WTC11 (cell line): ENCODE measurements at regions of chr1 and their contacts with region 1.

Region 1: GRCh38 chr1:179809506-179810366 is 66.6 kb downstream of the FAM163A start:
- DNase-seq: peak; percentile 75
- ATAC-seq: peak; percentile 75
- H3K4me3 Mint-ChIP-seq: no peak overlapping the region
- H3K27ac Mint-ChIP-seq: no peak overlapping the region
- H3K4me1 Mint-ChIP-seq: no peaks in the 10 kb centered on the region
- H3K27me3 Mint-ChIP-seq: peaks cover 6% of the 10 kb centered on the region
- CTCF ChIP-seq: peak; percentile 95

Region 2: GRCh38 chr1:179586107-179586823 is 223.5 kb before region 1 on chr1:
- CTCF ChIA-PET with region 1: interaction called, 17 read pairs
- POLR2A ChIA-PET with region 1: interaction called, 14 read pairs
- DNase-seq: peak; percentile 76
- ATAC-seq: peak; percentile 88
- H3K4me3 Mint-ChIP-seq: peak overlapping the region; percentile 57
- H3K27ac Mint-ChIP-seq: no peak overlapping the region
- H3K4me1 Mint-ChIP-seq: peaks cover 28% of the 10 kb centered on the region
- H3K27me3 Mint-ChIP-seq: peaks cover 76% of the 10 kb centered on the region
- CTCF ChIP-seq: peak; percentile 61

Region 3: DNA sequence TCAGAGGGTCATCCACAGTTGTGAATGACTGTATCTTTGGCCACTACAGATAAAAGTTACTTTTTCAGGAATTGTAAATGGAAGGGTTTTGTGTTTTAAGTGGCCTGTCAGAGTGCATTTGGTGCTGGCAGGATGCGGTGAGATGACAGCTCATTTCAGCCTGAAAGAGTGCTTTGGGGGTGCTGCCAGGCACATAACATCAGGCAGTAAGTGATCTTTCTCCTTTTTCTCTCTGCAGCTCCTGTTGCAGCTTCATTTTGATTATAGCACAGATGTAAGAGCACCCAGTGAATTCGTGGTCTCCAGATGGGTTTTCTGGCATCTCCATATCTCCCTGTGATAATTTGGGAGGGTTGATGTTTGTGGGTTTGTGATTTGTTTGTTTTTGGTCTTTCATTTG is 81.5 kb before region 1 on chr1:
- CTCF ChIA-PET with region 1: interaction called, 63 read pairs
- POLR2A ChIA-PET with region 1: no interaction called
- DNase-seq: no peak
- ATAC-seq: no peak
- H3K4me3 Mint-ChIP-seq: no peak overlapping the region
- H3K27ac Mint-ChIP-seq: no peak overlapping the region
- H3K4me1 Mint-ChIP-seq: no peaks in the 10 kb centered on the region
- H3K27me3 Mint-ChIP-seq: no peaks in the 10 kb centered on the region
- CTCF ChIP-seq: no peak

Region 4: DNA sequence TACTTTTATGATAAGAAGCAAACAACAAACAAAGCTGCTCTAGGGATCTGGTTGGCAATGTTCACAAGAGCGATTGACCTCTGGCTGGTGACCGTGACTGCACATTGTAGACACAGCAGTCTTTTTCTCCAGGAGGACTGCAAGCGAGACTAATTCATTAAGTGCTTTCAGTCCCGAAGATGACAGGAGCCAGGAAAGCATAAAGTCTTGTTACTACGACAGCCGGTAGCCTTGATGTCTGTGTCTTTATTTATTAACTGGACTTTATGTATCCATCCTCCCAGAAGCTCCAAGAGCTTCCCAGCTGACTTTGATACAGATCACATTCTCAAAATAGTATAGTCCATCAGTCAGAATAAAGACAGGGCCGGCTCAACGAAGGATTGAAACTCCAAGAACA is 48.4 kb before region 1 on chr1:
- CTCF ChIA-PET with region 1: interaction called, 20 read pairs
- POLR2A ChIA-PET with region 1: interaction called, 6 read pairs
- DNase-seq: no peak
- ATAC-seq: no peak
- H3K4me3 Mint-ChIP-seq: no peak overlapping the region
- H3K27ac Mint-ChIP-seq: no peak overlapping the region
- H3K4me1 Mint-ChIP-seq: peaks cover 12% of the 10 kb centered on the region; the same call in 1 of the 2 replicates
- H3K27me3 Mint-ChIP-seq: peaks cover 2% of the 10 kb centered on the region
- CTCF ChIP-seq: no peak

Region 5: GRCh38 chr1:179785031-179785431 is 24.7 kb before region 1 on chr1:
- CTCF ChIA-PET with region 1: interaction called, 60 read pairs
- POLR2A ChIA-PET with region 1: interaction called, 3 read pairs
- DNase-seq: no peak
- ATAC-seq: no peak
- H3K4me3 Mint-ChIP-seq: no peak overlapping the region
- H3K27ac Mint-ChIP-seq: no peak overlapping the region
- H3K4me1 Mint-ChIP-seq: peaks cover 22% of the 10 kb centered on the region
- H3K27me3 Mint-ChIP-seq: no peaks in the 10 kb centered on the region
- CTCF ChIP-seq: no peak

Region 6: GRCh38 chr1:179831852-179832699 is 22.3 kb after region 1 on chr1:
- CTCF ChIA-PET with region 1: interaction called, 30 read pairs
- POLR2A ChIA-PET with region 1: no interaction called
- DNase-seq: no peak
- ATAC-seq: peak; percentile 52
- H3K4me3 Mint-ChIP-seq: no peak overlapping the region
- H3K27ac Mint-ChIP-seq: no peak overlapping the region
- H3K4me1 Mint-ChIP-seq: peaks cover 24% of the 10 kb centered on the region
- H3K27me3 Mint-ChIP-seq: no peaks in the 10 kb centered on the region; the same call in none of the 2 replicates
- CTCF ChIP-seq: no peak

Region 7: GRCh38 chr1:179910934-179911333 is 101.2 kb after region 1 on chr1:
- CTCF ChIA-PET with region 1: no interaction called
- POLR2A ChIA-PET with region 1: no interaction called
- DNase-seq: no peak
- ATAC-seq: no peak
- H3K4me3 Mint-ChIP-seq: no peak overlapping the region
- H3K27ac Mint-ChIP-seq: no peak overlapping the region
- H3K4me1 Mint-ChIP-seq: no peaks in the 10 kb centered on the region
- H3K27me3 Mint-ChIP-seq: no peaks in the 10 kb centered on the region
- CTCF ChIP-seq: no peak

Region 8: GRCh38 chr1:180178511-180179161 is 368.9 kb after region 1 on chr1:
- CTCF ChIA-PET with region 1: interaction called, 17 read pairs
- POLR2A ChIA-PET with region 1: no interaction called
- DNase-seq: peak; percentile 83
- ATAC-seq: peak; percentile 80
- H3K4me3 Mint-ChIP-seq: no peak overlapping the region
- H3K27ac Mint-ChIP-seq: peak overlapping the region; percentile 77; the same call in 1 of the 2 replicates
- H3K4me1 Mint-ChIP-seq: no peaks in the 10 kb centered on the region
- H3K27me3 Mint-ChIP-seq: no peaks in the 10 kb centered on the region
- CTCF ChIP-seq: peak; percentile 90